A549 (cell line): ENCODE measurements at regions of chr17 and their contacts with region 1.

Region 1: GRCh38 chr17:33292184-33292980 is 713 bp downstream of the ASIC2 start:
- DNase-seq: peak; percentile 53 to 67
- ATAC-seq: peak; percentile 75 to 84
- H3K4me3 ChIP-seq: peak overlapping the region; percentile 57
- H3K27ac ChIP-seq: peak overlapping the region; percentile 76 to 88
- H3K4me1 ChIP-seq: no peaks in the 10 kb centered on the region; the same call in 1 of the 3 replicates
- CTCF ChIP-seq: peak; percentile 64
- EP300 ChIP-seq: no peak
- POLR2A ChIP-seq: no peak
- RAD21 ChIP-seq: peak; percentile 44 to 70

Region 2: GRCh38 chr17:33049781-33050414 is 242.5 kb before region 1 on chr17:
- CTCF ChIA-PET with region 1: interaction called, 20 read pairs
- POLR2A ChIA-PET with region 1: no interaction called
- DNase-seq: peak; percentile 59 to 76
- ATAC-seq: peak; percentile 55 to 90; a peak in 3 of 6 replicates
- H3K4me3 ChIP-seq: no peak overlapping the region
- H3K27ac ChIP-seq: peak overlapping the region in 1 of 2 experiments; percentile 27; a peak in 1 of 6 replicates
- H3K4me1 ChIP-seq: peaks cover 19% of the 10 kb centered on the region
- CTCF ChIP-seq: peak; percentile 83
- EP300 ChIP-seq: no peak
- POLR2A ChIP-seq: no peak
- RAD21 ChIP-seq: peak; percentile 60 to 75

Region 3: DNA sequence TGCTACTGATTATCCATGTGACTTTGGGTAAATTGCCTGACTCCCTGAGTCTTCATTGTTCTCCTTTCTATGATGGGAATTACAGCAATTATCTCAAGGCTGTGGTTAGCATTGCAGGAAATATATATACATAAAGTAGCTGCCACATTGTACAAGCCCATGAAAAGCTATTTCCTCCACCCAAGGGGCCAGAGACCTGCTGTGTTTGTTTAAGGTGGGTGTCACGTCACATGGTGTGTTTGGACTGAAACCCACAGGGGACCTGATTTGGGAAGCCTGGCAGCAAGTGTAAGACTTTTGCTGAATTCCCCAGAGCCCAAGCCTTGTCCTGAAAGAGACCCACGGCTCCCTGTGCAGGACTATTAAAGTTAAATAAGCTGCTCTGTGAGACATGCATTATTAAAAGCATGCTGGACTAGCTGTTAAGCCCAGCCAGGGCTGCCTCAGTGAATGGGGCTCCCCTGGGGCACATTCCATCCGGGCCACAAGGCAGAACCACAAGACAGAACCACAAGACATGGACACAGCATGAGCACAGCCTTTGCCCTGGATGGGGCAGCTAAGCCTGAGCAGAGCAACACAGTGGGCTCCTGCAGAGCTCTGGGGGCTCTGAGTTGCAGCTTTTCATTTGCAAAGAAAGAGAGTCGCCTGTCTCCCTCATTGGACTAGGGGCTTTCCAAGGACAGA is 151.8 kb before region 1 on chr17:
- CTCF ChIA-PET with region 1: interaction called, 17 read pairs
- POLR2A ChIA-PET with region 1: no interaction called
- DNase-seq: no peak
- ATAC-seq: no peak
- H3K4me3 ChIP-seq: no peak overlapping the region
- H3K27ac ChIP-seq: no peak overlapping the region
- H3K4me1 ChIP-seq: no peaks in the 10 kb centered on the region
- CTCF ChIP-seq: no peak
- EP300 ChIP-seq: no peak
- POLR2A ChIP-seq: no peak
- RAD21 ChIP-seq: no peak

Region 4: DNA sequence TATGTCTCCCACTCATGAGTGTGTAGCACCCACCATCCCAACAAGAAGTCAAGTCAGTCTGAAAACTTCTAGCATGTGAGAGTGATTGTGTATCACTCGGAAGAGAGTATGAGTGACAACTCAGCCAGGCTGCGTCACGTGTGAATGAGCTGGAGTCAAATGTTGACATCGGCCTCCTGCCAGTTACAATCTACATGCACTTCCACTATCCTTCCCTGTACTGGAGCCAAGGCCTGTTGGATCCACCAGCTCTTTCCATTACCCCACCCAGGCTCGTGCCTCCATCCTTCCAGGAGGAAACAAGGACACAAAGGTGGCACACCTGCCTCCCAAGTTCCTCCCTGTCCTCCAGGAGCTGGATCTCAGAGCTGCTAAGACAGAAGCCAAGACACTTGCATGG is 63.8 kb before region 1 on chr17:
- CTCF ChIA-PET with region 1: interaction called, 16 read pairs
- POLR2A ChIA-PET with region 1: no interaction called
- DNase-seq: no peak
- ATAC-seq: no peak
- H3K4me3 ChIP-seq: no peak overlapping the region
- H3K27ac ChIP-seq: no peak overlapping the region
- H3K4me1 ChIP-seq: no peaks in the 10 kb centered on the region
- CTCF ChIP-seq: no peak
- EP300 ChIP-seq: no peak
- POLR2A ChIP-seq: no peak
- RAD21 ChIP-seq: no peak

Region 5: DNA sequence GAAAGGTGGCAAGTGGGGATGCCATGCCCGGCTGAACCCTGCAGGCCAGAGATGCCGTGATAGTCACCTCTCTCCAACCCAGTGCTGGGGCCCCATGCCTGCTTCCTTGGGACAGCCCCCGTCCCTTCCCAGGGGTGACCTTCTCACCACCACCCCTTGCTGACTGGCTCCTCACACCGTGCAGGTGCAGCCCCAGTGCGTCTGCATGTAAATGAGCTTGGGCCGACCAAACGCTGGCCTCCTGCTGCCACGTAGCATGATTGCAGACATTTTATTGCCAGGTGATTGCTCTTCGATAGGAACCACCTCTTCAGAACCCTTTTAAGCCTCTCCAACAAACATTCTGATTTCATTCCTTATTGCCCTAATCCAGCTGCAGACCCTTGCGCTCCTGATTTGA is 31.7 kb before region 1 on chr17:
- CTCF ChIA-PET with region 1: interaction called, 18 read pairs
- POLR2A ChIA-PET with region 1: no interaction called
- DNase-seq: no peak
- ATAC-seq: no peak
- H3K4me3 ChIP-seq: no peak overlapping the region
- H3K27ac ChIP-seq: no peak overlapping the region
- H3K4me1 ChIP-seq: 0 out of 3 replicates have a peak, but pooled peaks cover 5% of the 10 kb centered on the region
- CTCF ChIP-seq: no peak
- EP300 ChIP-seq: no peak
- POLR2A ChIP-seq: no peak
- RAD21 ChIP-seq: no peak

Region 6: GRCh38 chr17:33302394-33302793 is 10.0 kb after region 1 on chr17:
- CTCF ChIA-PET with region 1: interaction called, 34 read pairs
- POLR2A ChIA-PET with region 1: no interaction called
- DNase-seq: no peak
- ATAC-seq: no peak
- H3K4me3 ChIP-seq: no peak overlapping the region
- H3K27ac ChIP-seq: no peak overlapping the region
- H3K4me1 ChIP-seq: no peaks in the 10 kb centered on the region
- CTCF ChIP-seq: no peak
- EP300 ChIP-seq: no peak
- POLR2A ChIP-seq: no peak
- RAD21 ChIP-seq: no peak